ENCODE measurements at regions of chr15 and their contacts with region 1.

Region 1: DNA sequence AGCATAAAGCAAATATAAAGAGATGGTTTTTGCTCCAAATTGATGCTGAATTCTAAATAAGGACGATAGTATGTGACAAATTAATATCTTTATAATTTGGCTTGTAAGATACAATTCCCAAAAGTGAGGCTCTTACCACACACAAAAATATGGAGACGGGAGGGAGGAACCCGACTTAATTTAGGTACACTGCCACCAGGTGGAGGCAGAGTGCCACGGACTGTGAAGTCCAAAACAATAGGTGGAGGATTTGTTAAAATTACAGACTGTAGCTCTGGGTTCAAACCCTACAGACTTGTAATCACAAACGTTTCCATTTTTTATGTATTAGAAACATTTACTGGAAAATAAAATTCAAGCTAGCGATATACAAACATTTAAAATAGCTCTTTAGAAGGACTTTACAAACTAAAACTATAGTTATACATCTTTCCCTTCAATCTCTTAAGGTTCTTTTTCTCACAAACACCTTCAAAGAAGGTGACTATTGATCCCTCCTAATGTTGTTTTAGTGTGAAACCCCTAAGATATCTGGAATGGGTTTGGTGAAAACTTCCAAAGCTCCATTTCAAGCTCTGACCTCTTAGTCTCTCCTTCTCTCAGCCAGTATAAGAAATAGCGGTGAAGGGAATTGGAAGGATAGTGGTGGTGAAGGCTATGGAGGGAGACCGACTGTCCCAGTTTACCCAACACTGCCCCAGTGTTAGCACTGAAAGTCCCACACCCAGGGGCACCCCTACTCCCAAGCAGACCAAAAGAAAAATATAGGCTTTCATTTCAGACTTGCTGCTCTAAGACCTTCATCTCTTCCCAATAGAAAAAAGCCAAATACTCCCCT is 89.7 kb downstream of the AQP9 start:
- DNase-seq: peak; percentile 86
- H3K4me3 ChIP-seq: no peak overlapping the region
- H3K27ac ChIP-seq: no peak overlapping the region
- H3K4me1 ChIP-seq: peaks cover 12% of the 10 kb centered on the region
- H3K27me3 ChIP-seq: no peaks in the 10 kb centered on the region
- CTCF ChIP-seq: peak; percentile 87

Region 2: DNA sequence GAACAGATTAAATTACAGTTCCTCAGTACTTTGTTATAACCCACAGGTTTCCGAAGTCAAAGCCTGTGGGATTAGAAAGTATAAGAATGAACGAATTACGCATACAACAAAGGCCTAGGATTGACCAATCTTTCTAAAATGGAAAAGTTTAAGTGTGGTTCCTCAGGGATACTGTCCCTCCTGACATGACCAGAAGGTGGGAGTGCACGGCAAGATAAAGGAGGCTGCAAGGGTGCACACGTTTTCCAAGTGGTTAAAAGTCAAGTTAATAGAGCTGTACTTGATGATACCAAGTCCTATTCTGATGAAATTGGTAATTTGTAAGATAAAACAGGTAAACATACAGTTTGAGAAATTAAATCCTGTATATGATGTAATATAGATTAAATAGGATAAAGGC is 258.6 kb before region 1 on chr15:
- CTCF ChIA-PET with region 1: no interaction called
- POLR2A ChIA-PET with region 1: no interaction called
- intact Hi-C with region 1: no loop called
- DNase-seq: peak; percentile 9
- H3K4me3 ChIP-seq: no peak overlapping the region
- H3K27ac ChIP-seq: no peak overlapping the region
- H3K4me1 ChIP-seq: no peaks in the 10 kb centered on the region
- H3K27me3 ChIP-seq: no peaks in the 10 kb centered on the region
- CTCF ChIP-seq: peak; percentile 42

Region 3: DNA sequence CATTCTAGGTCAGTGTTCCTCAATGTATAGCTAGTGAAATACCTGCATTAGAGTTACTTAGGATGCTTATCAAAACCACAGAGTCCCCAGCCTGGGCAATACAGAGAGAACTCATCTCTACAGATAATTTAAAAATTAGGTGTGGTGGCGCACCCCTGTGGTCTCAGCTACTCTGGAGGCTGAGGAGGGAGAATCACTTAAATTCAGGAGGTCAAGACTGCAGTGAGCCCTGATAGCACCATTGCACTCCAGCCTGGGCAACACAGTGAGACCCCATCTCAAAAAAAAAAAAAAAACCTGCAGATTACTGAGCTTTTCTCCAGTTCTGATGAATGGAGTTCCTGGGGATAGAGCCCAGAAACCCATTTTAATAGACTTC is 533.1 kb after region 1 on chr15:
- CTCF ChIA-PET with region 1: interaction called, 6 read pairs
- POLR2A ChIA-PET with region 1: no interaction called
- intact Hi-C with region 1: loop called (anchors 5 kb)
- DNase-seq: no peak
- H3K4me3 ChIP-seq: no peak overlapping the region
- H3K27ac ChIP-seq: no peak overlapping the region
- H3K4me1 ChIP-seq: no peaks in the 10 kb centered on the region
- H3K27me3 ChIP-seq: no peaks in the 10 kb centered on the region
- CTCF ChIP-seq: peak; percentile 39; the same call in 1 of the 2 replicates

Region 4: DNA sequence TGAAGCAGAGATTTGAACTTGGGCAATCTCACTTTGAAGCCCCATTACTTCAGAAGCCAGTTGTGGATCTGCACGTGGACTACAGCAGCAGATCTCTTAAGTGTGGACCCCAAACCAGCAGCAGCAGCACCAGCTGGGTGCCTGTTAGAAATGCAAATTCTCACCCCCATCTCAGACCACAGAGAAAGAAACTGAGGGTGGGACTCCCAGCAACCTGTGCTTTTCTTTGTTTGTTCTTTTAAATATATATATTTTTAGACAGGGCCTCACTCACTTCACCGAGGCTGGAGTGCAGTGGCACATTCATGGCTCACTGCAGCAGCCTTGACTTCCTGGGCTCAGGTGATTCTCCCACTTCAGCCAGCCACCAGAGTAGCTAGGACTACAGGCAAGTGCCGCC is 652.4 kb after region 1 on chr15:
- CTCF ChIA-PET with region 1: interaction called, 3 read pairs
- POLR2A ChIA-PET with region 1: no interaction called
- intact Hi-C with region 1: loop called (anchors 10 kb)
- DNase-seq: no peak
- H3K4me3 ChIP-seq: no peak overlapping the region
- H3K27ac ChIP-seq: peak overlapping the region; percentile 59
- H3K4me1 ChIP-seq: peaks cover 26% of the 10 kb centered on the region
- H3K27me3 ChIP-seq: no peaks in the 10 kb centered on the region
- CTCF ChIP-seq: no peak

Region 5: DNA sequence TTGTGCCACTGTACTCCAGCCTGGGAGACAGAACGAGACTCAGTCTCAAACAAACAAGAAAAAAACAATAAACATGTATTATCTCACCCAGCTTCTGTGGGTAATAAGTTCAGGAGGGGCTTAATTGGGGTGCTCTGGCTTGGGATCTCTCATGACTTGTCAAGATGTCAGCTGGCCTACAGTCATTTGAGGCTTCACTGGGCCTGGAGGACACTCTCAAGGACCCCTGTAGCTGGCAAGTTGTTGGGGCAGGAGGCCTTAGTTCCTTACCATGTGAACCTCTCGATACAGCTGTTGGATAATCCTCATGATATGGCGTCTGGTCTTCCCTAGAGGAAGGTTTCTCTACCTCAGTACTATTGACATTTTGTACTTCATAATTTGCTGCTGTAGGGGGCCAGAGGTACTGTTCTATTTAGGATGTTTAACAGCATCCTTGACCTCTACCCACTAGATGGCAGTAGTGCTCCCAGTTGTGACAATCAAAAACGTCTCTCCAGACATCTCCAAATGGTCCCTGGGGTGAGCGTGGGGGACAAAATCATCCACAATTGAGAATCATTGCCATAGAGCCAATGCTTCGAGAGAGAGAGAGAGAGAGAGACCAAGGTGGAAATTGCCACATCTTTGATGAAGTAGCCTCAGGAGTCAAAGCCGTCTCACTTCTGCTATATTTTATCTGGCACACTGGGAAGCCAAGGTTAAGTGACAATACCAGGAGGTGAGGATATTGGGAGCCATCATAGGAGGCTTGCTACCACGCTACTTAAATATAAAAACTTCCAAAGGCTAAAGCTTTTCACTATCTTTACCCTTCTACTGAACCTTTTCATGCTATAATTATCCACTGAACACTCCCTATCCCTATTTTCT is 729.4 kb after region 1 on chr15:
- CTCF ChIA-PET with region 1: no interaction called
- POLR2A ChIA-PET with region 1: no interaction called
- intact Hi-C with region 1: loop called (anchors 10 kb)
- DNase-seq: peak; percentile 90
- H3K4me3 ChIP-seq: no peak overlapping the region
- H3K27ac ChIP-seq: no peak overlapping the region
- H3K4me1 ChIP-seq: no peaks in the 10 kb centered on the region
- H3K27me3 ChIP-seq: no peaks in the 10 kb centered on the region
- CTCF ChIP-seq: peak; percentile 80

Region 6: GRCh38 chr15:59492389-59493377 is 1264.8 kb after region 1 on chr15:
- CTCF ChIA-PET with region 1: no interaction called
- POLR2A ChIA-PET with region 1: no interaction called
- intact Hi-C with region 1: loop called (anchors 10 kb)
- DNase-seq: peak; percentile 71
- H3K4me3 ChIP-seq: no peak overlapping the region
- H3K27ac ChIP-seq: no peak overlapping the region
- H3K4me1 ChIP-seq: no peaks in the 10 kb centered on the region
- H3K27me3 ChIP-seq: no peaks in the 10 kb centered on the region
- CTCF ChIP-seq: peak; percentile 82

Region 7: DNA sequence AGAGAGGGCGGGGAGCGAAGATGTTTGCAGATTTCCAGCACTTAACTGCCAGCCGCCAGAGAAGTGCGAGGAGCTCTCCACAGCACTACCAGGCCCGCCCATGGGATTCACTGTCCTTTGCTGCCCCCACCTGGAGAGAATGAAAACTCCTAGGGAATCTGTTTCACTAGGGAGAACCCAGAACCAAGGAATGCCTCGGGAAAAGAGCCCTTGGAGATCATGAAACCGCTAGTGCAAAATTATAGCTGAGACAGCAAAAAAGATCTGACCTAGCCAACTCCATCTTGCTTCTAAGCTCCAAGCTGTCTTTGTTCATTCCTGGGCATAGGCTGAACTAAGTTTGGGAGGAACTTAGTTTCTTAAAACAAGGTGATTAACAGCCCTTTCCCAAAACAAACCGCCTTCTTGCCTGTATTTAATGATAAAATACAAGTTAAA is 1301.1 kb after region 1 on chr15:
- CTCF ChIA-PET with region 1: interaction called, 4 read pairs
- POLR2A ChIA-PET with region 1: no interaction called
- intact Hi-C with region 1: loop called (anchors 2 kb)
- DNase-seq: peak; percentile 93
- H3K4me3 ChIP-seq: no peak overlapping the region
- H3K27ac ChIP-seq: no peak overlapping the region
- H3K4me1 ChIP-seq: no peaks in the 10 kb centered on the region
- H3K27me3 ChIP-seq: no peaks in the 10 kb centered on the region
- CTCF ChIP-seq: peak; percentile 81

Measured in A673 (cell line).